CD14-positive monocyte (primary cell): ENCODE measurements at regions of chr17 and their contacts with region 1.

Region 1: GRCh38 chr17:45317112-45317928 is 500 bp upstream of the MAP3K14 start:
- DNase-seq: peak; percentile 100
- H3K4me3 ChIP-seq: peak overlapping the region; percentile 31 to 90 (median 37)
- H3K4me3 Mint-ChIP-seq: peak overlapping the region; percentile 78 to 90
- H3K27ac ChIP-seq: peak overlapping the region; percentile 73 to 81
- H3K27ac Mint-ChIP-seq: peak overlapping the region; percentile 93 to 97 (median 96)
- H3K4me1 ChIP-seq: peaks cover 61 to 68% of the 10 kb centered on the region in 2 donors
- H3K4me1 Mint-ChIP-seq: peaks cover 63% of the 10 kb centered on the region
- H3K27me3 ChIP-seq: no peaks in the 10 kb centered on the region
- H3K27me3 Mint-ChIP-seq: peaks cover 0 to 4% (median 1%) of the 10 kb centered on the region in 3 donors
- CTCF ChIP-seq: no peak

Region 2: DNA sequence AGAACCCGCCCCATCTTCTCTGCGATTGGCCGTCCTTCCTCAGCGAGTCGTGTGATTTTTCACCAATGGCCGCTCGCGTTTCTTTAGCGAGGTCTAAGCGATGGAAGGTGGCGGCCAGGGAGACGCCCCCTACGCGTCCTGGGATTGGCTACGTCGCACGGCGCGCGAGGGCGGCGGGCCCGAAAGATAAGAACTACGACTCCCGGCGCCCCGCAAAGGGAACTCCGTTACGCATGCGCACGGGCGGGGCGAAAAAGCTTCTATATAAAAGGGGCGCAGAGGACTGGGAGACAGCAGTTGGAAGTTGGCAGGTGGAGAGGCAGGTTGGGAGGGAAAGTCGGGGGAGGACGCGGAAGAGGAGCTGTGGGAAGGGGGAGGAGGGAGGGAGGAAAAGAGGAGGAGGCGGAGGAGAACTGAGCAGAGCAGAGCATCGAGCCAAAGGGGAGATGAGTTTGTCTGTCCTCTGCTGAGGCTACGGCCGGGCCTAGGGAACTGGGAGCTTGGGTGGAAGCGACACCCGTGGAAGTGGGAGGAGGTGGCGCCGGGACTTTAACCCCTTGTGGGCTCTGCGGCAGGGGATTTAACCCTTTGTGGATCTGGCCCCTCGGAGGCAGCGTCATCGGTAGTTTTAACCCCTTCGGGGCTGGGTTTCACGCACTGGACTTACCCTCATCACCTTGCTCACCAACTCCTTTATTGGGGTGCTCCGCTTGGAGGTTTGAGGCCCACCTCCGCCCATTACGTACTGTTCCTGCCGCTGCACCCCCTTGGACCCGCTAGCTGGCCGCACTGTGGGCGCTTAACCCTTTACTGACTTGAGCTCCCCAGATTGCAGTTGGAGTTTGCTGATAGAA is 168.9 kb before region 1 on chr17 and contains the start of gene HEXIM1:
- intact Hi-C with region 1: loop called in 1 of 2 experiments (anchors 10 kb)
- DNase-seq: peak; percentile 99 to 100 (median 100)
- H3K4me3 ChIP-seq: peak within 1 kb of the TSS; percentile 80 to 92 (median 83)
- H3K4me3 Mint-ChIP-seq: peak within 1 kb of the TSS; percentile 99 to 100
- H3K27ac ChIP-seq: peak within 1 kb of the TSS; percentile 89 to 99
- H3K27ac Mint-ChIP-seq: peak within 1 kb of the TSS; percentile 97 to 100 (median 99)
- H3K4me1 ChIP-seq: peaks cover 56 to 75% of the 10 kb centered on the region in 2 donors
- H3K4me1 Mint-ChIP-seq: peaks cover 53% of the 10 kb centered on the region
- H3K27me3 ChIP-seq: no peaks in the 10 kb centered on the region
- H3K27me3 Mint-ChIP-seq: peaks cover 0 to 2% (median 0%) of the 10 kb centered on the region in 3 donors
- CTCF ChIP-seq: no peak
- polyA plus RNA-seq, gene HEXIM1: 2.2 to 14.8 (median 2.5) TPM

Region 3: DNA sequence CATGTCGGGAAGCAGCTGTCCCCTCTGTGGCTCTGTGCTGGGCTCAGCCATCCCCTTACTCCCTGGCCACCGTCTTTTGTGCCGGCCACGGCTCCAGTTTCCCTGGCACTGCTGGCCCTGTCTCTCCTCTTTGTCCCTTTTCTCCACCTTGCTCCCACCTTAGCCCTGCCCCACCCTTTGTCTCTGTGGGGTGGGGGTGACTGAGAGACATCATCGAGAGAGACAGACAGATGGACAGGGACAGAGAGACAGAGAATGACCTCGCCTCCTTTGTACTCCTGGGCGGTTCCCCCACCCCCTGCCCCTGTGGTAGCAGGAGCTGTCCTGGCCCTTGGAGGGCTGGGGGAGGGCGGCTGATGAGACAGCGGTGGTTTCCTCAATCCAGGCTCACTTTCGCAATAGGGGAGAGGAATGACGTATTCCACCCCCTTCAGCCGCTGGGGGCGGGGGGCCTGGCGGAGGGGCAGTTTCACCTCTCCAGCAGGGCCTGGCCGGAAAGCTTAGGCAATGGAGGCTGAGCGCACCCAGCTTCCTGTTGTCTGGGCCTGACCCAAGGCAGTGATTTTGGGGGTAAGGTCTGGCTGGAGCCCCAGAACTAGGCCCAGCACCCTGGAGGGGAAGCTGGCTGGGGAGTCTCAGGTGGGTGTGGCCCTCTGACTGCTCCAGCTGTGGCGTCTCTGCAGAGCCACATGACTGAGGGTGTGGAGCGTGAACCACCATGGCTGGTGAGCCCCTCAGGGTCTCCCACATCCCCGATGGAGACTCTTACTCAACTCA is 88.4 kb before region 1 on chr17:
- intact Hi-C with region 1: loop called in 1 of 2 experiments (anchors 5 kb)
- DNase-seq: peak; percentile 99 to 100 (median 99)
- H3K4me3 ChIP-seq: peak overlapping the region; percentile 15 to 99 (median 31)
- H3K4me3 Mint-ChIP-seq: peak overlapping the region; percentile 95 to 99
- H3K27ac ChIP-seq: peak overlapping the region; percentile 93 to 99
- H3K27ac Mint-ChIP-seq: peak overlapping the region; percentile 98 to 100 (median 100)
- H3K4me1 ChIP-seq: peaks cover 95 to 97% of the 10 kb centered on the region in 2 donors
- H3K4me1 Mint-ChIP-seq: peaks cover 96% of the 10 kb centered on the region
- H3K27me3 ChIP-seq: no peaks in the 10 kb centered on the region
- H3K27me3 Mint-ChIP-seq: peaks cover 0 to 4% (median 0%) of the 10 kb centered on the region in 3 donors
- CTCF ChIP-seq: no peak

Region 4: DNA sequence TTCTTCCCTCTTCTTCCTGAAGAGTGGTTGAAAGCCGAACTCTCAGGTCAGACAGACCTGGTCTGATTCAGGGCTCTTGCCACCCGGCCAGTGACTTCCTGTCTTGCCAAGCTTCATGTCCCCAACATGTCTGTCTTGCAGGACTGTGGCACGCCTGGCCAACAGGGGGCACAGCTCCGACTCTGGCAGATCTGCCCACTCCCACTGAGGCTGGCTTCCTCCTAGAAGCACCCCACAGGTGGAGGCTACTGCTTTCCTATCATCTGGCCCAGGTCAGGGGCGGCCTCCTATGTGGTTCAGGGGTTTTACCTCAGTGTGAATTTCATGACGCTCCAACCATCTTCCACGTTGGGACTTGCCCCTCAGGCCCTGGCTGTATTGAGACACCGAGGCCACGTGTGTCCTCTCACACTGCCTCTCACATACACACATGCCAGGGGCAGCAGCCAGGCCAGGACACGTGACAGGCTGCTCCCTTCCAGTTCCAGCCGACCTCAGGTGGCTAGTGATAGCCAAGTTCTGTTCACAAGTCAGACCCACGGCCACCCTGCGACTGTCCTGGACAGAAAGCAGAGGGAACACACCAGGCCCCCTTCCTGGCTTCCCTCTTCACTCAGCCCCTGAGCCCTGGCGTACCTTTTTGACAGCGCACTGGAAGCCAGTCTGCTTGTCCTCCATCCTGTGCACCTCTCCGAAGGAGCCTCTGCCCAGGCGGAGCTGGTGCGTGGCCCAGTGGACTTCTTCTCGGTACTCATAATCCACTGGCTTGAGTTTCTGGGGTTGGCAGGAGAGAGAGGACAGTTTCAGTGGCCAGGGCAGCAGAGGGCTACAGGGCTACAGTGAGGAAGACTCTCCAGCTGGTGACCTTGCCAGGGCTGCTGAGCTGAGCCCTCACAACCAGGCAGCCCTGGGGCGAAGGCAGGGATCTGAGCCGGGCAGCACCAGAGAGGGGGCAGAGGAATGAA is 32.9 kb before region 1 on chr17:
- intact Hi-C with region 1: loop called (anchors 5 kb)
- DNase-seq: peak in 2 of 3 donors; percentile 39 to 52
- H3K4me3 ChIP-seq: no peak overlapping the region
- H3K4me3 Mint-ChIP-seq: no peak overlapping the region
- H3K27ac ChIP-seq: no peak overlapping the region
- H3K27ac Mint-ChIP-seq: peak overlapping the region in 4 of 7 donors; percentile 4 to 74 (median 60)
- H3K4me1 ChIP-seq: peaks cover 0 to 2% of the 10 kb centered on the region in 2 donors
- H3K4me1 Mint-ChIP-seq: peaks cover 6% of the 10 kb centered on the region
- H3K27me3 ChIP-seq: no peaks in the 10 kb centered on the region
- H3K27me3 Mint-ChIP-seq: peaks cover 0 to 2% (median 0%) of the 10 kb centered on the region in 3 donors
- CTCF ChIP-seq: peak; percentile 36

Region 5: DNA sequence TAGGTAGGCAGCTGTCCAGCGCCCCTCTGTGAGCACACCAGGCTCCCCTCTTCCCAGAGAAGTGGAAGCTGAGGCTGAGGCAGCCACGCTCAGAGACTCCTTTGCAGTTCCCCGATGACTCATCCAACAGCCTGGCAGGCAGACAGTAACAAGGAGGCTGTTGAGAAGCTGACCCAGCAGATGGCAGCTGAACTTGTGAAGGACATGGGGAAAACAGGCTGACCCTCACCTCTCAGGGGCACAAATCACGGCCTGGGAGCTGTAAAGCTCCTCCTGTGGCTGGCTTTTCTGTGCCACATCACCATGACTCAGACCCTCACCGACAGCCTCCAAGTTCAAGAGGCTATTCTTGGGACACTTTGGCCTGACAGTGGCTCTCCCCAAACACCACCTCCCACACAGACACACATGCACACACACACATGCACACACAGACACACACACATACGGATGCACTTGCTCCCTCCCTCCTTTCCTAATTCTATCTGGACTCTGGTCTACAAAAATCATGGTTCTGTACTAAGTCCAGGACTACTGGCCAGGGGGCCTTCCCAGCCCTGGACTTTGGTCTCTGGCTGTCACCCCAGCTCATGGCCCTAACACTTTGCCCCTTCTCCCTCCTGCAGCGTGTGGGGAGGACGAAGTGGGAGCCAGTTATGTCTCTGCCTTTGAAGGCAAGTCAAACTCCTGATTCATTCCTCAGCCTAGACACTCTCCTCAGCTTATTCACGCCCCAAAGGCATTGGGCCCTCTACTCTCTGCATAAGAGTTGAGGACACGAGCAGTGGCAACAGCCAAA is 23.7 kb before region 1 on chr17:
- intact Hi-C with region 1: loop called (anchors 1 to 5 kb)
- DNase-seq: peak; percentile 88 to 95 (median 94)
- H3K4me3 ChIP-seq: peak overlapping the region in 1 of 3 experiments; percentile 44
- H3K4me3 Mint-ChIP-seq: peak overlapping the region; percentile 20 to 57
- H3K27ac ChIP-seq: peak overlapping the region; percentile 34 to 77
- H3K27ac Mint-ChIP-seq: peak overlapping the region; percentile 85 to 94 (median 88)
- H3K4me1 ChIP-seq: peaks cover 86 to 89% of the 10 kb centered on the region in 2 donors
- H3K4me1 Mint-ChIP-seq: peaks cover 88% of the 10 kb centered on the region
- H3K27me3 ChIP-seq: no peaks in the 10 kb centered on the region
- H3K27me3 Mint-ChIP-seq: peaks cover 0 to 2% (median 0%) of the 10 kb centered on the region in 3 donors
- CTCF ChIP-seq: no peak

Region 6: GRCh38 chr17:45353043-45353442 is 35.7 kb after region 1 on chr17:
- intact Hi-C with region 1: loop called in 1 of 2 experiments (anchors 5 kb)
- DNase-seq: peak; percentile 80 to 97 (median 85)
- H3K4me3 ChIP-seq: no peak overlapping the region
- H3K4me3 Mint-ChIP-seq: no peak overlapping the region
- H3K27ac ChIP-seq: no peak overlapping the region
- H3K27ac Mint-ChIP-seq: peak overlapping the region in 4 of 7 donors; percentile 13 to 38 (median 28)
- H3K4me1 ChIP-seq: peaks cover 8 to 12% of the 10 kb centered on the region in 2 donors
- H3K4me1 Mint-ChIP-seq: peaks cover 13% of the 10 kb centered on the region
- H3K27me3 ChIP-seq: no peaks in the 10 kb centered on the region
- H3K27me3 Mint-ChIP-seq: peaks cover 5 to 8% (median 7%) of the 10 kb centered on the region in 3 donors
- CTCF ChIP-seq: no peak

Region 7: DNA sequence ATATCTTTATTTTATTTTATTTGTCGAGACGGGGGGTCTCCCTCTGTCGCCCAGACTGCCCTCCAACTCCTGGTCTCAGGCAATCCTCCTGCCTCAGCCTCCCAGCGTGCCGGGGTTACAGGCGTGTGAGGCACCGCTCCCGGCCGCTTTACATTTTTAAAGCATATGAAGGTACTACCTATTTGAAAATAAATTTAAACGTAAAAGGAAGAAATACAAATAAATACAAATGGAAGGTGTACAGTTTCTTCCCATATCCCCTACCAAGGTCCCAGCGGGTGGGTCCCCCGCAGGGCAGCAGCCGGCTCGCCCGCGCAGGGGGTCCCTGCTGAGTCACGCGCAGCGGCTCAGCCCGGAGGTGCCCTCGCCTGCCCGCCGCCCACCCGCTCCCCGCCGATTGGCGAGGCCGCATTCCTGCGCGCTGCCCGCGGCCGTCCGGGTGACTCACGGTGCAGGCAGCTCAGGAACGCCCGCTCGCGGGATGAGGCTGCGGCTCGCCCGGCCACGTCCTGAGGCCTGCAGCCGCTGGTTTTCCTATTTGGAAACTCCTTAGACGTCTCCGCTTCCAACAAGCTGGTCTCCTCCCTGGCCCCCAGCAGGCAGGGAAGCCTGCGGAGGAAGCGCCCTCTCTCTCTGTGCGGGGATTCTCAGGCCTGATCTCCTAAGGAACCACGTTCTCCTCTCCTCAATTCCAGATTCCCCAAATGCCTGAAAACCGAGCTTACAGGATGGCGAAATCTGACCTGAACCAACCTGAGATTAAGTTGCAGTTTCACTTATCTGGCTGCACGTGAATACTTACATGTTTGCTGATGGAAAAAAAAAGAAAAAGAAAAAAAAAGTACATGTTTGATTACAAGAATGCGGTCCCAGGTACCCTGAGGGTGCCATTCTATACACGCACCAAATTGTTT is 54.4 kb after region 1 on chr17:
- intact Hi-C with region 1: loop called in 1 of 2 experiments (anchors 5 kb)
- DNase-seq: peak; percentile 27 to 69 (median 60)
- H3K4me3 ChIP-seq: peak overlapping the region in 1 of 3 experiments; percentile 57
- H3K4me3 Mint-ChIP-seq: peak overlapping the region; percentile 16 to 88
- H3K27ac ChIP-seq: no peak overlapping the region
- H3K27ac Mint-ChIP-seq: peak overlapping the region in 4 of 7 donors; percentile 19 to 83 (median 48)
- H3K4me1 ChIP-seq: peaks cover 28 to 39% of the 10 kb centered on the region in 2 donors
- H3K4me1 Mint-ChIP-seq: peaks cover 32% of the 10 kb centered on the region
- H3K27me3 ChIP-seq: peaks cover 0 to 3% of the 10 kb centered on the region in 2 donors
- H3K27me3 Mint-ChIP-seq: peaks cover 11 to 19% (median 14%) of the 10 kb centered on the region in 3 donors
- CTCF ChIP-seq: no peak

Region 8: DNA sequence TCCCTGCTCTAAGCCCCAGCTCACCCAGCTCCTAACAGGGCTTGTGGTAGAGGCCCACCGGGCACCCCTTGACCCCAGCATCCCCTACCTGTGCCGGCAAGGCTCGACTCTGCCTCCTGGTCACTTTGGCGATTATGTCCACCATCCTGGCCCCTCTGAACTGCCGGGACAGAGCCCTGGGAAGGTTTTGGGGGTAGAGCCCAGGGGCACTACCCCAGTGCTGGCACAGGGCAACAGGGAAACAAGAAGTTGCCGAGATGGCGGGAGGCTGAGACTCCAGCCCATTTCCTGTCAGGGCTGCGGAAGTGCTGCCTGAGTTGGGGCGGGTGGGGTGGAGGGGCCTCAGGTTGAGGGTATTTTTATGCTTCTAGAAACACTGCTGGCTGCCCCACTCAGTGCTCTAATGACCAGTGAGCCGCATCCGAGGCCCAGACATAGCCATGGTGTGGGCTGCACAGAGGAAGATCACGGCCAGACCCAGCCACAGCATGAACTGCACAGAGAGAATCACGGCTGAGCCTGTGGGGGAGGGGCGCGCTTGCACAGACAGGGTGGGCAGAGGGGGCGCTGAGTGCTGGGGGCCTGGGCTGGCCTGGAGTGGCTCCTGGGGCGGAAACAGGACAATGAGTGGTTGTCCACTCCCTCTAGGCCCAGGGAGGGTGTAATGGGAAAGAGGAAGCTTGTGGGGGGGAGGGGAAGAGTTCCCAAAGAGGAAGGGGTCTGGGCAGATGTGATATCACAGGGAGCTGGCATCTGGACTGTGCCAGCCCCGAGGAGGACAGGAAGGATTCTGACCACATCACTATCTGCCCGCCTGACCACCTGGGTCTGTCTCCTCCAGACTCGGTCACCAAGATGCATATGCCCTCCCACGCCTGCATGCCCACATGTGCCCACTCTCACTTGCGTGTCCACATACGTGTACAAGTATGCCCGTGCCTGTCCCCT is 93.1 kb after region 1 on chr17:
- intact Hi-C with region 1: no loop called
- DNase-seq: peak; percentile 70 to 89 (median 80)
- H3K4me3 ChIP-seq: peak overlapping the region; percentile 65 to 99 (median 82)
- H3K4me3 Mint-ChIP-seq: peak overlapping the region; percentile 99
- H3K27ac ChIP-seq: peak overlapping the region; percentile 85 to 91
- H3K27ac Mint-ChIP-seq: peak overlapping the region; percentile 94 to 98 (median 96)
- H3K4me1 ChIP-seq: peaks cover 93 to 98% of the 10 kb centered on the region in 2 donors
- H3K4me1 Mint-ChIP-seq: peaks cover 85% of the 10 kb centered on the region
- H3K27me3 ChIP-seq: no peaks in the 10 kb centered on the region
- H3K27me3 Mint-ChIP-seq: peaks cover 0 to 2% (median 0%) of the 10 kb centered on the region in 3 donors
- CTCF ChIP-seq: no peak

Region 9: DNA sequence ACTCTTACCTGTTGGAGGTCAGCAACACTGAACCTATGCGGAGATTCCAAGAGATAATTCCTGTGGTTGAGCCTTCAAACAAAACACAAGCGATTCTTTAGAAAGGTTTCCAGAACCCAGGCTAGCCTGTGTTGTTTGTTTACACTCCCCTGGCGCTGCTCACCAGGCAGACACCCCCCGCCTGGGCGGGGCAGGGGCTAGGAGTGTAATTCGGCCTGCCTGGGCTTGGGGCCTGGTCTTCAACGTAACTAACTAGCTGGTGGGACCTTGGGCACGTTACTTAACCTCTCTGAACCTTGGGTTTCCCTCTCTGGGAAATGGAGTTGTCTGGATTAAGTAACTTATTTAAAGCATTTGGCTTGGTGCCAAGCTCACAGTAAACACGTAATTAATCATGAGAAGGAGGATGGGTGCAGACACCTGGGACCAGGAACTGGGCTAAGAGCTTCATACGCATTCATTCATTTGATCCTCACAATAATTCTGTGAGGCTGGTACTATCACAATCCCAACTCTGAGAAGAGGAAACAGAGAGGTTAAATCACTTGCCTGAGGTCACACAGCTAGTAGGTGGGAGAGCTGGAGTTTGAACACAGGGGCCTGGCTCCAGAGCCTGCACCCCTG is 122.9 kb after region 1 on chr17:
- intact Hi-C with region 1: no loop called
- DNase-seq: no peak
- H3K4me3 ChIP-seq: no peak overlapping the region
- H3K4me3 Mint-ChIP-seq: no peak overlapping the region
- H3K27ac ChIP-seq: no peak overlapping the region
- H3K27ac Mint-ChIP-seq: no peak overlapping the region
- H3K4me1 ChIP-seq: no peaks in the 10 kb centered on the region
- H3K4me1 Mint-ChIP-seq: peaks cover 8% of the 10 kb centered on the region
- H3K27me3 ChIP-seq: no peaks in the 10 kb centered on the region
- H3K27me3 Mint-ChIP-seq: peaks cover 0 to 2% (median 1%) of the 10 kb centered on the region in 3 donors
- CTCF ChIP-seq: no peak